HCT116 (cell line): ENCODE measurements at regions of chr12 and their contacts with region 1.

Region 1: GRCh38 chr12:121663610-121663929 is 5.9 kb downstream of the MORN3 start:
- DNase-seq: no peak
- ATAC-seq: no peak
- H3K4me3 ChIP-seq: 0 out of 4 replicates have a peak overlapping the region, but pooled peaks of 1 of the 2 experiments have one; percentile 67
- H3K27ac ChIP-seq: peak overlapping the region; percentile 21; the same call in 1 of the 2 replicates
- H3K4me1 ChIP-seq: peaks cover 3 to 18% of the 10 kb centered on the region in 2 experiments; a peak in 3 of 4 replicates
- H3K27me3 ChIP-seq: no peaks in the 10 kb centered on the region
- CTCF ChIP-seq: no peak
- POLR2A ChIP-seq: no peak
- RAD21 ChIP-seq: no peak

Region 2: DNA sequence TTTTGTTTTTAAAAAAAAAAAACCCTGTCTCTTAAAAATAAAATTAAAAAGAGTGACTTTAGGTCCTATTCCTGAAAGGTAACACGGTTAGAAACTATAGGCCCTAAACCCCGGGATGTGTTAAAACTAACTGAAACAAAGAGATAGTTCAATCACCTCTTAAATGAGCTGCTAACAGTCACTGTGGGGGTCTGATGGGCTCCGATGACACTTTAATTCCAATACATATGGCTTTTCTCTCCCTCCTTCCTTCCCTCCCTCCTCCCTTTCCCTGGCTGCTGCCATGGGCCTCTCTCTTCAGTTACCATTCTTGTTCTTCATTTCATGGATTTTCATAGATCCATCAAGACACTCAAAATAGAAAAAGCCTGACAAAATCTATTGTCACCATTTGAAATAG is 187.1 kb before region 1 on chr12:
- CTCF ChIA-PET with region 1: no interaction called
- POLR2A ChIA-PET with region 1: no interaction called
- RAD21 ChIA-PET with region 1: no interaction called
- intact Hi-C with region 1: no loop called
- DNase-seq: no peak
- ATAC-seq: no peak
- H3K4me3 ChIP-seq: no peak overlapping the region
- H3K27ac ChIP-seq: no peak overlapping the region
- H3K4me1 ChIP-seq: peaks cover 0 to 7% of the 10 kb centered on the region in 2 experiments; a peak in 2 of 4 replicates
- H3K27me3 ChIP-seq: no peaks in the 10 kb centered on the region
- CTCF ChIP-seq: no peak
- POLR2A ChIP-seq: no peak
- RAD21 ChIP-seq: no peak

Region 3: GRCh38 chr12:121626087-121626852 is 37.3 kb before region 1 on chr12 and contains the start of gene ORAI1:
- CTCF ChIA-PET with region 1: interaction called, 5 read pairs
- POLR2A ChIA-PET with region 1: no interaction called
- RAD21 ChIA-PET with region 1: no interaction called
- intact Hi-C with region 1: loop called (anchors 5 kb)
- DNase-seq: peak; percentile 83
- ATAC-seq: peak; percentile 79
- H3K4me3 ChIP-seq: peak within 1 kb of the TSS; percentile 86 to 87
- H3K27ac ChIP-seq: peak within 1 kb of the TSS; percentile 79
- H3K4me1 ChIP-seq: peaks cover 30 to 48% of the 10 kb centered on the region in 2 experiments
- H3K27me3 ChIP-seq: no peaks in the 10 kb centered on the region
- CTCF ChIP-seq: no peak
- POLR2A ChIP-seq: no peak
- RAD21 ChIP-seq: no peak
- total RNA-seq, gene ORAI1: 20.2 TPM